Activated CD4-positive, alpha-beta T cell treated with anti-CD3 and anti-CD28 coated beads for 36 hours (primary cell): ENCODE measurements at regions of chrX and their contacts with region 1.

Region 1: GRCh38 chrX:64205735-64206491 is 405 bp upstream of the AMER1 start:
- DNase-seq: peak; percentile 91
- ATAC-seq: peak; percentile 89
- H3K4me3 Mint-ChIP-seq: peak overlapping the region; percentile 75
- H3K27ac Mint-ChIP-seq: peak overlapping the region; percentile 87
- H3K4me1 Mint-ChIP-seq: peaks cover 13% of the 10 kb centered on the region
- H3K27me3 Mint-ChIP-seq: no peaks in the 10 kb centered on the region

Region 2: GRCh38 chrX:63754860-63755582 is 450.9 kb before region 1 on chrX:
- CTCF ChIA-PET with region 1: no interaction called
- POLR2A ChIA-PET with region 1: interaction called, 5 read pairs
- intact Hi-C with region 1: loop called in 1 of 2 experiments (anchors 1 kb)
- DNase-seq: peak; percentile 92
- ATAC-seq: peak; percentile 97
- H3K4me3 Mint-ChIP-seq: peak overlapping the region; percentile 95
- H3K27ac Mint-ChIP-seq: peak overlapping the region; percentile 97
- H3K4me1 Mint-ChIP-seq: peaks cover 33% of the 10 kb centered on the region
- H3K27me3 Mint-ChIP-seq: no peaks in the 10 kb centered on the region

Region 3: DNA sequence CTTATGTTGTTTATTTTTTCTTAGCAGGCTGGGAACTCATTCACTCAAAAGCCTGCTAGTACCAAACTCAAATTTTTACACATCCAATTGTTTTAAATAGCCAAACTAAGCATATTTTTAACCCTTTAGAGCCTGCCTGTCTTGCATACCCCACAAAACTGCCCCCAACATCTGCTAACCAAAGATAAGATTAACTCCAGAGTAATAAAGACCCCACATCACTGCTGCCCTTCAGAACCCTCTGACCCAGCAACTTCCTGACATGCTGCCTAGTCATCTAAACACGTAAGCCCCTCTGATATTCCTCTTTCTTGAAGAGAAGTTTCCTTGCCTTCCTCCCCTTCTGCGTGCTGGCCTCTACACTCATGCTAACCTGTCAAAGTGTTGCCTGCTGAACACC is 85.2 kb after region 1 on chrX:
- CTCF ChIA-PET with region 1: no interaction called
- POLR2A ChIA-PET with region 1: no interaction called
- intact Hi-C with region 1: no loop called
- DNase-seq: no peak
- ATAC-seq: no peak
- H3K4me3 Mint-ChIP-seq: no peak overlapping the region
- H3K27ac Mint-ChIP-seq: no peak overlapping the region
- H3K4me1 Mint-ChIP-seq: no peaks in the 10 kb centered on the region
- H3K27me3 Mint-ChIP-seq: no peaks in the 10 kb centered on the region

Region 4: DNA sequence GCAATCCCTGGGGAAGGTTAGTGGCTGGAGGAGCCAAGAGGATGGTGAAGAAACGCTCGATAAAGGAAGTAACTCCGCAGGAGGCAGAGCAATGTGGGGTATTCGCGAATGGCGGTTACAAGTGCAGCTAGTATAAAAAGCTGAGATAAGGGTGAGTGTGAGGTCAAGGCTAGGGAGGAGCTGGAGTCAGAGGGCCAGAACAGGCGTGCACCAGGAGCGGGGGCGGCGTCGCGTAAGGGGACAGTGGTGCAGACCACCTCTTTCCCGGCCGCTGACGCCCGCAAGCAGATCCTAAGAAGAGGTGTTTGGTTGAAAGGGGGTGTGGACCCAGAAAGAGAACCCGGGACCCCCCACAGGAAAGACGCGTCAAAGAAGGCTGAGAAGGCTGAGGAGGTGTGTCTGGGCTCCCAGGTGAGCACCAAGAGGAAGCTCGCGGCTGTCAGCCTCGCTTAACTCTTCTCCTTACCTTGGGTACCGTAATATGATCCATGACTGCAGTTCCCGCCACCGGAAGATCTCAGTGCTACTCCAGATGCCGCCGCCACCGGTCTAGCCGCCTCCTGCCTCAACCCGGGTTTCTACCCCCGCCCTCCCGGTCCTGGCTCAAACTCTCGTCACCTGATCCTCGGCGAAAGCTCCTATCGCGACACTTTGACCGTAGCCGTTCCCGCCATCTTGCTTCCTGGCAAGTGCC is 189.1 kb after region 1 on chrX and contains the start of gene MTMR8:
- CTCF ChIA-PET with region 1: no interaction called
- POLR2A ChIA-PET with region 1: interaction called, 3 read pairs
- intact Hi-C with region 1: loop called (anchors 1 kb)
- DNase-seq: peak; percentile 88
- ATAC-seq: peak; percentile 98
- H3K4me3 Mint-ChIP-seq: peak within 1 kb of the TSS; percentile 88
- H3K27ac Mint-ChIP-seq: peak within 1 kb of the TSS; percentile 86
- H3K4me1 Mint-ChIP-seq: peaks cover 28% of the 10 kb centered on the region
- H3K27me3 Mint-ChIP-seq: no peaks in the 10 kb centered on the region
- total RNA-seq, gene MTMR8: 3.4 to 4.1 TPM

Region 5: GRCh38 chrX:64805683-64806082 is 599.8 kb after region 1 on chrX:
- CTCF ChIA-PET with region 1: no interaction called
- POLR2A ChIA-PET with region 1: no interaction called
- intact Hi-C with region 1: no loop called
- DNase-seq: no peak
- ATAC-seq: no peak
- H3K4me3 Mint-ChIP-seq: no peak overlapping the region
- H3K27ac Mint-ChIP-seq: no peak overlapping the region
- H3K4me1 Mint-ChIP-seq: no peaks in the 10 kb centered on the region
- H3K27me3 Mint-ChIP-seq: no peaks in the 10 kb centered on the region

Region 6: DNA sequence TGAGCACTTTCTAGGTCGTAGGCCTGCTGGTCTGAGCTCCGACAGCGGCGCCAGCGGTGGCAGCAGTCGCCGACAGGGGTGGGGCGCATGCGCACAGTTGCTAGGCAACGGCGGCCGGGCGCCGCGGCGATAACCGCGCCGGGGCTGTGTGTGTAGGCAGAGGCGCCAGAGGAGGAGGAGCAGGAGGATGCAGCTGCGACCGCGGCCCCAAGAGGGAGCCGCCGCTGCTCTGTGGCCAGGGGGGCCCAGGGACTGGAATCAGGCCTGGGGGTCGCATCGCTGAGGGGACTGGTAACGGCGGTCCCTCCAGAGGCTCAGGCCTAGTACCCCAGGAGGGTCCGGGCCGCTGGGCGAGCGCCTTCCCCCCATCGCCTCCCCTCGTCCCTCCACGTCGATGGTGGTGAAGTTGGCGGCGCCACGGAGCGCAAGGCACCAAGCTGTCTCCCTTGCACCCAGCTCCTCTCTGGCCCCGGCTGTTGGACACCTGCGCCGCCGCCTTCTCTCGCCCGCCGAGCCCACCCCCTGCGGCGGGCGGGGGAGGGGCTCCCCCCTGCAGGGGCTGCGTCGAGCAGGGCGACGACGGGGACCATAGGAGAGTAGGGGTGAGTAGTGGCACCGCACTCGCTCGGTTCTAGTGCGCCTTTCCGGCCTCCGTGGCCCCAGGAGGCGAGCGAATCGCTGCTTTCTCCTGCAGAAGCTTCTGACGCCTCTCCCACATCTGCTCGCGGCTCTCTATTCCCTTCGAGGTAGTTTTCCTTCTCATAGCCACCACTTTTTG is 828.9 kb after region 1 on chrX:
- CTCF ChIA-PET with region 1: no interaction called
- POLR2A ChIA-PET with region 1: no interaction called
- intact Hi-C with region 1: loop called in 1 of 2 experiments (anchors 2 kb)
- DNase-seq: peak; percentile 90
- ATAC-seq: peak; percentile 92
- H3K4me3 Mint-ChIP-seq: peak within 1 kb of the TSS; percentile 87
- H3K27ac Mint-ChIP-seq: peak within 1 kb of the TSS; percentile 85
- H3K4me1 Mint-ChIP-seq: peaks cover 17% of the 10 kb centered on the region
- H3K27me3 Mint-ChIP-seq: no peaks in the 10 kb centered on the region